A549 (cell line): ENCODE measurements at regions of chr3 and their contacts with region 1.

Region 1: DNA sequence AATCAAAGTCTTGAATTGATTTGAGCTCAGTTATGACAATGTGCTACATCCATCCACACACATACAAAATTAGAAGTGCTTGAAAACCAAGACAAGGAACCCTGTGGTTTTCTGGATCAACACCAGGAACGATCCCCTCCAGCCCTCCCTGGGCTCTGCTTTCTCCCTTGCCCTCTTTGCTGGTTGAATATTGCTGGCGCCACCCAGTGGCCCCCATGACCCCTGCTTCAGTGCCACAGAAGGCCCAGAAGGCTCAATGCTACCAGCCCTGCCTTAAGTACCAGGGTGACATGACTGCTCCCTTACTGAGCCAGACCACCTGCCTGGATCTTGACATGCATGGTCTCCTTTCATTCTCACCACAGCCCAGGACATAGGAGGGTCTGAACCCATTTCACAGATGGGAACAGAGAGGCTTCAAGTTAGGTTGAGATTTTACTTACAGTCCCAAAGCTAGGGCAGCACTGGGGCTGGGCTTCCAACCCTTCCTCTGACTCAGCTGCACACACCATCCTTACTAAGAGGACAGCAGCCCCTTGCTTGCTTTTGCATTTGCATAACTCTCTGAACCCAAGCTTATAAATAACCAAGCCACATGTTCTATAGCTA is 15.0 kb downstream of the IL12A start:
- DNase-seq: peak; percentile 60 to 69
- ATAC-seq: peak; percentile 87 to 95
- H3K4me3 ChIP-seq: no peak overlapping the region
- H3K27ac ChIP-seq: no peak overlapping the region; a peak in 1 of 6 replicates
- H3K4me1 ChIP-seq: no peaks in the 10 kb centered on the region; the same call in 2 of the 3 replicates
- CTCF ChIP-seq: peak; percentile 79
- EP300 ChIP-seq: no peak
- POLR2A ChIP-seq: no peak
- RAD21 ChIP-seq: peak; percentile 76 to 82

Region 2: DNA sequence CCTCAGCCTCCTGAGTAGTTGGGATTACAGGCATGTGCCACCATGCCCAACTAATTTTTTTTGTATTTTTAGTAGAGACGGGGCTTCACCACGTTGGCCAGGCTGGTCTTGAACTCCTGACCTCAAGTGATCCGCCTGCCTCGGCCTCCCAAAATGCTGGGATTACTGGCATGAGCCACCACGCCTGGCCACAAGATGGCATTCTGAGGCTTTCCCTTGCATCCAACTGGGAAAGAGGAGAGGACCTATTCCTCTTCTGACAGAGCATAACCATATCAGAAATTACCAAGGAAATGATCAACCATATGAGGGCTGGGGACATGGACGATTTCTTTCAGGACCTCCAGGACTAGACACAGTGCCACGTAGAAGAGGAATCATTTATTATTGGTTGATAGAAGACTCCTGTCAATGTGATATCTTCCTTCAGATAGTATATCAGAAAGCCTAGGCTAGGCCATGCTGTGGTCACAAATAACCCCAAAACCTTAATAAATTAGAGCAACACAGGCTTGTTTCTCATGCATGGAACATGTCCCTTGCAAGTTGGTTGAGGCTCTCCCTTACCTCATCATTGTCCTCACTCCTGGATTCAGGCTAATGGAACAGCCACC is 387.3 kb before region 1 on chr3:
- CTCF ChIA-PET with region 1: interaction called, 14 read pairs
- POLR2A ChIA-PET with region 1: no interaction called
- DNase-seq: peak; percentile 34 to 67
- ATAC-seq: peak; percentile 62 to 86; a peak in 4 of 6 replicates
- H3K4me3 ChIP-seq: no peak overlapping the region
- H3K27ac ChIP-seq: peak overlapping the region; percentile 1 to 29; a peak in 2 of 6 replicates
- H3K4me1 ChIP-seq: peaks cover 27% of the 10 kb centered on the region
- CTCF ChIP-seq: peak; percentile 67
- EP300 ChIP-seq: no peak
- POLR2A ChIP-seq: no peak
- RAD21 ChIP-seq: peak; percentile 91 to 96

Region 3: DNA sequence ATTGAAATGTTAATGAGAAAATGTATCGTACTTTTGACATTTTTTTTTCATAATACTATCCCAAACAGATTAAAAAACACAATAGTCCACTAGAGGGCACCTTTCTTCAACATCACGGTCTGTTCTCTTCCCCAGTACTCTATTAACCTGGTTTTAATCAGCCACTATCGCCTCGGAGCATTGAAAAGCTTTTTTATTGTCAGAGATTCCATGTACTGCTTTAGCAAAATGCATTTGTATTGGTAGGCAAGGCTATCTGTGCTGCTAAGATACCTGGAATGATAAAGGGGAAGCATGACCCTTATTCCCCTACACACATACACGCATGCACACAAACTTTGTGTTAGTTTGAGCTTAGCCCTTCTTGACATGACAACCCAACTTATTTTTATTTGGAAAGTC is 175.1 kb before region 1 on chr3:
- CTCF ChIA-PET with region 1: interaction called, 130 read pairs
- POLR2A ChIA-PET with region 1: no interaction called
- DNase-seq: peak; percentile 38 to 54
- ATAC-seq: peak in 1 of 2 experiments; percentile 66; a peak in 3 of 6 replicates
- H3K4me3 ChIP-seq: no peak overlapping the region
- H3K27ac ChIP-seq: peak overlapping the region; percentile 78 to 85
- H3K4me1 ChIP-seq: peaks cover 50% of the 10 kb centered on the region
- CTCF ChIP-seq: peak; percentile 72
- EP300 ChIP-seq: no peak
- POLR2A ChIP-seq: no peak
- RAD21 ChIP-seq: peak; percentile 62 to 71

Region 4: DNA sequence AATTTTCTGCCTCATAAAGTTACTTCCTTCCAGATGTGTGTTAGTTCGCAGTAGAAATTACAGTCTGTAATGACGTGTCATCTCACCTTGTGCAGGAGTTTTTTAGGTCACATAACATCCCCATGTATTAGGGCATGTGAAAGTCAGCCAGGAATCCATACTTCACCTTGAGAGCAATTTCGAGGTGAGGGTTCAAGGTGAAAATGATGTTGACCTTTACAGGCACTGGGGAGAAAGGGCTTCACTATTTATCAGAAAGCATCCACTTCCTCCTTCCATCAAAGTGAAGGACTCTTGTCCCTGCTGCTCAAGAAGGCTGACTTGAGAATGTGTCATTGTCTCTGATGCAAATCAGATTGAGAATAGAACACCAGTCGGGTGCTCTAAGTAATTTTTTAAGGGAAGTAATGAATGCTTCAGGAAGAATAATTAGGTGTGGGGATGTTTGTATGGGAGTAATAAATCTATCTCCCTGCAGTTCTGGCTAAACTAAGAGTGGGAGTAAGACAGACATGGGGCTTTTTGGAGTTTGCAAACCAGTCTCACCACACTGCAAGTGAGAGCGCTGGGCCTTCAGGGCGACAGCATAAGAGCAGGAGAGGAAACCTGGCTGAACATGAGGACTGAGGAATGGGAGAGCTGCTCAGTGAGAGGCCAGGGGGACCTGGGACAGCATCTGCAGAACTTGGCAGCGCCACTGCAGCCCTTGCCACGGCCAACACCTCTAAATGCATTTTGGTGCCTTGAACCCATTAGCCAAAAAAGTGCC is 100.9 kb before region 1 on chr3:
- CTCF ChIA-PET with region 1: interaction called, 19 read pairs
- POLR2A ChIA-PET with region 1: no interaction called
- DNase-seq: no peak
- ATAC-seq: peak in 1 of 2 experiments; percentile 32; a peak in 2 of 6 replicates
- H3K4me3 ChIP-seq: no peak overlapping the region
- H3K27ac ChIP-seq: no peak overlapping the region
- H3K4me1 ChIP-seq: no peaks in the 10 kb centered on the region
- CTCF ChIP-seq: no peak
- EP300 ChIP-seq: no peak
- POLR2A ChIP-seq: no peak
- RAD21 ChIP-seq: no peak

Region 5: DNA sequence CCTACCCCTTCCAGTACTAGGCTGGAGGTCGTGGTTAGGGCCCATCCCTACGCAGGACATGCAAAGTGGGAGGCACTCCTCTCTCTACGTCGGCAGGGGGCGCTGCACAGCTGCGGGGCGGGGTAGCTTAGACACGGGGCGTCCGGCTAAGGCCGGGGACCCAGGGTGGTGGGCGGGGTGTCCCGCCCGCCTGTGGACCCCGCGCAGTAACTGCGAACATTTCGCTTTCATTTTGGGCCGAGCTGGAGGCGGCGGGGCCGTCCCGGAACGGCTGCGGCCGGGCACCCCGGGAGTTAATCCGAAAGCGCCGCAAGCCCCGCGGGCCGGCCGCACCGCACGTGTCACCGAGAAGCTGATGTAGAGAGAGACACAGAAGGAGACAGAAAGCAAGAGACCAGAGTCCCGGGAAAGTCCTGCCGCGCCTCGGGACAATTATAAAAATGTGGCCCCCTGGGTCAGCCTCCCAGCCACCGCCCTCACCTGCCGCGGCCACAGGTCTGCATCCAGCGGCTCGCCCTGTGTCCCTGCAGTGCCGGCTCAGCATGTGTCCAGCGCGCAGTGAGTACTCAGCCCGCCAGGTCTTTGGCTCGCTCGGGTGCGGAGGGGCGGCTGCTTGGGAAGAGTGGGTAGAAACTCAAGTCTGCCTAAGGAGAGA is 14.9 kb before region 1 on chr3 and contains the start of gene IL12A:
- CTCF ChIA-PET with region 1: interaction called, 158 read pairs
- POLR2A ChIA-PET with region 1: no interaction called
- DNase-seq: peak; percentile 81 to 82
- ATAC-seq: peak; percentile 96 to 99
- H3K4me3 ChIP-seq: peak within 1 kb of the TSS; percentile 85
- H3K27ac ChIP-seq: peak within 1 kb of the TSS; percentile 84 to 90
- H3K4me1 ChIP-seq: 0 out of 3 replicates have a peak, but pooled peaks cover 8% of the 10 kb centered on the region
- CTCF ChIP-seq: peak; percentile 94
- EP300 ChIP-seq: no peak
- POLR2A ChIP-seq: no peak
- RAD21 ChIP-seq: peak; percentile 59 to 65
- polyA plus RNA-seq, gene IL12A: 0.66 and 1.7 TPM in 2 replicates

Region 6: DNA sequence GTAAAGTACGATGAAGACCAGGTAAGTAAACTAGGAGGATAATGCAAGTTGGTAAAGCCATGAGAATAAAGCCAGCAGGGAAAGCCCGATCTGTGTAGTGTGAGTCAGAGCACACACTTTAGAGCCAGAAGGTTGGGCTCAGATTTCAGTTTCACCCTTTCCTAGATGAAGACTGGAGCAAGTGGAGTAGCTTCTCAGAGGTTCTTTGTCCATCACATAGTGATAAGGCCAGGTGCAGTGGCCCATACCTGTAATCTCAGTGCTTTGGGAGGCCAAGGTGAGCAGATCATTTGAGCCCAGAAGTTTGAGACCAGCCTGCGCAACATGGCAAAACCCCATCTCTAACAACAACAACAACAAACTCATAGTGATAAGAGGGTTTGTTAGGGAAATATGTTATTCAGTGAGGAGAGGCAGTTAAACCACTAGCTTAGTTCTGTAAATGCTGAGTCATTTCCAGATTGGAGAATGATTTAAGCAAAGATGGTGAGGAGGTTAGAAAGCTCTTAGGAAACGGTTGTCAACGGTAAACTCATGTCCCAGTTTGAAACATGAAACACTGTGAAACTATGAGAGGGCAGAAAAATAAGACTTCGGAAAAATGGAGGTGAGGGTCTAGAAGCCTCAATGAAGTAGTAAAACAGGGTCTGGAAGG is 24.0 kb after region 1 on chr3:
- CTCF ChIA-PET with region 1: interaction called, 15 read pairs
- POLR2A ChIA-PET with region 1: no interaction called
- DNase-seq: peak in 1 of 2 experiments; percentile 23
- ATAC-seq: peak; percentile 44 to 63; a peak in 3 of 6 replicates
- H3K4me3 ChIP-seq: no peak overlapping the region
- H3K27ac ChIP-seq: peak overlapping the region; percentile 48 to 72; a peak in 5 of 6 replicates
- H3K4me1 ChIP-seq: peaks cover 19% of the 10 kb centered on the region
- CTCF ChIP-seq: no peak
- EP300 ChIP-seq: no peak
- POLR2A ChIP-seq: no peak
- RAD21 ChIP-seq: no peak

Region 7: DNA sequence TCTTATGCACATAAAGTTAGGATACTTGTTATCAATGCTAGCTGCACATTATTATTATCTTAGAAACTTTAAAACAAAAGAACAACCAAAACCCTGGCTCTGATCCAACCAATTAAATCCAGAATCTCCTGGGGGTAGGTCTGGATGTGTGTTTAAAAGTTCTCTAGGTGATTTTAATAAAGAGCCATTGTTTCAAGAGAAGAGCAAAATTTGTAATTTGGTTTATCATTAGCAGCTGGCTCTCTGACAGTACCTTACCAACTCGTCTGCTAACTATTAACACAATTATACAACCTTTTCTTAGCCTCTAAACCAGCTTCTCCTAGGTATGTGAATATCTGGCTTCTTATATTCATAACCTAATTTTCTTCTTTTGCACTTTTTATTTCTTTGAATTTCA is 326.5 kb after region 1 on chr3:
- CTCF ChIA-PET with region 1: no interaction called
- POLR2A ChIA-PET with region 1: no interaction called
- DNase-seq: no peak
- ATAC-seq: no peak
- H3K4me3 ChIP-seq: no peak overlapping the region
- H3K27ac ChIP-seq: peak overlapping the region; percentile 87 to 90
- H3K4me1 ChIP-seq: peaks cover 23% of the 10 kb centered on the region
- CTCF ChIP-seq: no peak
- EP300 ChIP-seq: no peak
- POLR2A ChIP-seq: no peak
- RAD21 ChIP-seq: no peak